ENCODE measurements at regions of chr19 and their contacts with region 1.

Region 1: GRCh38 chr19:51108066-51108804 is at the start of gene CTU1:
- DNase-seq: peak; percentile 96 to 100 (median 99)

Region 2: GRCh38 chr19:51091926-51092873 is 16.0 kb before region 1 on chr19:
- intact Hi-C with region 1: no loop called
- DNase-seq: no peak

Region 3: DNA sequence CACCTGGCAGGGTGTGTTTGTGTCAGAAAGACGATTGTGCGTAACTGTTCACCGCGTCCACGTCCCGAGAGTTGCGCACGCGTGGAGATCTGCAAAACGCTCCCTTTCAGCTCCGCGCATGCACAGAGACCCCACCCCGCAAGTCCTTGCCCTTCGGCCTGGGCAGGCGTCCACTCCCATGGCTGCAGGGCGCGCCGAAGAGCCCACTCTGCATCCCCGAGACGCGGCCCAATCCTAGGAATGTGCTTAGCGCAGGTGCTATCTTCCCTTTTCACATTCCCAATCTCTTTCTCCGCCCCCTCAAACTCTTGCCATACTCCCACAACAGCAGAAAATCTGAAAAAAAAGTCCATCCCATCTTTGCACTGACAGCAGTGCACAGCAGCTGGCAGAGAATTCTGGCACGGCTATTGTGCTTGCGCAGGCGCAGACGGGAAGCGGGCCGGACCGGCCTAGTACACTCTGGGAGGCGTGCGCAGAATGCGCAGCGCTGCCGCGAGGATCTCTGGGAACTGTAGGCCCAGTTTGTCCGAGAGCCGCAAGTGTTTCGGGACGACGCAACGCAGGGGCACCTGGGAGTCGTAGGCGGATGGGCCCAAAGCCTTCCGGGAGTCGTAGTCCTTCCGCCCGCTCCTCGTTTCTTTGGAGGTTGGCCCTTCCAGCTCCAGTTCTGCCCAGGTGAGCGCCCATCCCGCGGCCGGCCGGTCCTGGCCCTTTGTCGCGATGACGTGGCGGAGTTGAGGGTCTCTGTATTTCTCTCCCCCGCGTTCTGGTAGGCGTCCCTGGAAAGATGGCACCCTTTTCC is 485.9 kb after region 1 on chr19:
- intact Hi-C with region 1: loop called (anchors 2 kb)
- DNase-seq: peak; percentile 97 to 100 (median 99)